ENCODE measurements at regions of chr3 and their contacts with region 1.

Region 1: DNA sequence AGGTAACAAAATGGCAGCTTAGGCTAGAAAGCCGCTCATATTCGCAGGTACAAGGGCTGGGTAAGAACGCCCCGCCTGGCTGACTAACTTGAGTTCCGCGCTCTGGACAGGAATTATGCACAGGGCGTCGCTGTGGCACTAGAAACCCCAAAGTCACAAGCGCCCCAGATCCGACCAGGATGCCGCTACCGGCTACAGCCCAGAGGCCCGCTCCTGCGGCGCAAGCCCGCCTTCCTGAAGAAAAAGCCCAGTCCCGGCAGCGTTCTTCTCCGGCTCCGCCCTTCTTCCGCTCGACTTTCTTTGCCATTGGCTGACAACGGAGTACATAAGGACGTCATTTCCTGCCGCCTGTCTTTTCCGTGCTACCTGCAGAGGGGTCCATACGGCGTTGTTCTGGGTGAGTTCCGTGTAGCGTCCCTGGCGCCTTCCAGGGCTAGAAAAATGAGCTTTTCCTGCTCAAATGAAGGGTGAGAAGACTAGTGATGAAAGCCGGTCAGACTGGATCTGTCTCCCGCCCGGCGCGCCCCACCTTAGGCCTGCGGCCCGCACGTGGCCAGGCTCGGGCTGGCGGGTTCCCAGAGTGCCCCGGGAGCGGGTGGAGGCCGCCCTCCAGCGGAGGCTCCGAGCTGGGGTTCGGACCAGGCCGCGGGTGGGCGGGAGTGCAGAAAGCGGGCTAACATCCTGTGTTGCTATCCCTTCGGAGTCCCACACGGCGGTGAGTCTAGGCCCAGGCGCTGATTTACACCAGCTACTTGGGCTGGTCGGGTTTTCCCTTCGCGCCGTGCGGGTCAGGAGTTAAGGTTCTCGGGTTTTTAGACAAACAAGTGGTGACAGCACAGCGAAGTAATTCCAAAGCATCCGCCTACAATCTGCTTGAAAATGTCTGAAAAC is at the start of gene RPSA:
- DNase-seq: peak; percentile 98
- H3K4me3 Mint-ChIP-seq: peak within 1 kb of the TSS; percentile 95
- H3K27ac Mint-ChIP-seq: peak within 1 kb of the TSS; percentile 99
- H3K4me1 Mint-ChIP-seq: peaks cover 46% of the 10 kb centered on the region
- H3K27me3 Mint-ChIP-seq: peaks cover 2% of the 10 kb centered on the region
- total RNA-seq, gene RPSA: 2,627 to 2,738 TPM

Region 2: DNA sequence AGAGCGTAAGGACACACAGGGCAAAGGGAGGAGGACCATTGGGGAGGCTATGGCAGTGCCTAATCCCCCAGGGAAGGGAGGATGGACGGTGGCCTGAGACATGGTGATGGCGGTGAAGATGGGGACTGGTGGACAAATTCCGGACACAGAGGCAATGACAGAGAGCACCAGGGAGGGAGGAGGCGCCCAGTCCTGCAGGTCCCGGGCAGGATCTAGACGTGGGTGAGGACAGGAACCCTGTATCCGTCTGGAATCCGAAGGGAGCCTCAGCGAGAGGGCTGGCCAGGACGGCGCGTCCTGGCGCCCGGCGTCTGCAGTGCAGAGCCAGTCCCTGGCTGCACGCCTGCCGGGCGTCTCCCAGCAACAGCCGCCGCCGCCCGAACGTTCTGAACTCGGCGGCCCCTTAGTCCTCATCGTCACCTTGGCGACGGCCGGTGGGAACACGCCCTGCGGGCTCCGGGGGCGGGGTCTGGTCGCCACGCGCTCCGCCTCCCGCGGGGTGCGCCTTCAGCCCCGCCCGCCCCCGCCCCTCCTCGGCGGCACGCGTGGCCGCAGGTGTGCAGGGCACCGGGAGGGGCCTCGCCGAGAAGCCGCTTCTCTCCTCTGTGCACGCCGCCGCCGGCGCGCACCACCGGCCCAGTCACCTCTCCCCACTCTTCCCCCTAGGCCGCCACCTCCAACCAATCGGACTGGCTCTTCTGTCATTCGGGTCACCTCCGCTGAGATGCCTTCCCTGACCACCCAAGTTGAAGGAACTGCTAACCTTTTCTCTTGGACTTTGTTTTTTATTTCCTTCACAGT is 225.9 kb before region 1 on chr3:
- CTCF ChIA-PET with region 1: no interaction called
- POLR2A ChIA-PET with region 1: interaction called, 4 read pairs
- intact Hi-C with region 1: loop called (anchors 1 kb)
- DNase-seq: peak; percentile 92
- H3K4me3 Mint-ChIP-seq: peak overlapping the region; percentile 76
- H3K27ac Mint-ChIP-seq: peak overlapping the region; percentile 78
- H3K4me1 Mint-ChIP-seq: peaks cover 49% of the 10 kb centered on the region
- H3K27me3 Mint-ChIP-seq: no peaks in the 10 kb centered on the region

Region 3: DNA sequence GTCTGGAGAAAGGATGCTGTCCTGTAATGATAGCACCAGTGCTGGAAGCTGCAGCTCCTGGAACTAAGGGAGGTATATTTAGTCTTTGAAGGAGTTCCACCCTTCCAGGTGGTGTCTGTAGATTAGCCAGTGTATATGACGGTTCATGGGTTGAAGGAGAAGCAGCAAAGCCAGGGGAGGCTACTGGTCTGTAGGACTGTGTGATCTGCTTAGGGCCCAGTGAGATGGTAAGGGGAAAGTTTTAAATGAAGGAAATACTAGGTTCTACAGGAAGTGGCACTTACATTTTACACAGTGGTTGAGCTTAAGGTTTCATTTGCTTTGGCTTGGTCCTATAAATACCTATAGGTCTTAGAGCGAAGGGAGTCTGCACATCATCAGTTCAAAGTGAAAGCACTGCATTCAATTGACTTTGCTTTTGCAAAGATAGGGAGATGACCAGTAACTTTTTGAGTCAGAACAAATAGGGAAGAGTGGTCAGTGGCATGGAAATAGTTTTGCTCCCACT is 17.8 kb before region 1 on chr3:
- CTCF ChIA-PET with region 1: interaction called, 6 read pairs
- POLR2A ChIA-PET with region 1: interaction called, 26 read pairs
- intact Hi-C with region 1: loop called (anchors 1 kb)
- DNase-seq: no peak
- H3K4me3 Mint-ChIP-seq: no peak overlapping the region
- H3K27ac Mint-ChIP-seq: peak overlapping the region; percentile 73
- H3K4me1 Mint-ChIP-seq: peaks cover 52% of the 10 kb centered on the region
- H3K27me3 Mint-ChIP-seq: no peaks in the 10 kb centered on the region

Region 4: GRCh38 chr3:40309418-40309924 is 902.9 kb after region 1 on chr3 and contains the start of gene EIF1B:
- CTCF ChIA-PET with region 1: no interaction called
- POLR2A ChIA-PET with region 1: interaction called, 3 read pairs
- intact Hi-C with region 1: loop called (anchors 2 kb)
- DNase-seq: peak; percentile 99
- H3K4me3 Mint-ChIP-seq: peak within 1 kb of the TSS; percentile 96
- H3K27ac Mint-ChIP-seq: peak within 1 kb of the TSS; percentile 97
- H3K4me1 Mint-ChIP-seq: peaks cover 23% of the 10 kb centered on the region
- H3K27me3 Mint-ChIP-seq: no peaks in the 10 kb centered on the region
- total RNA-seq, gene EIF1B: 48.6 to 51.0 TPM

Measured in activated CD4-positive, alpha-beta memory T cell treated with anti-CD3 and anti-CD28 coated beads for 36 hours (primary cell).